ENCODE measurements at regions of chr11 and their contacts with region 1.

Region 1: DNA sequence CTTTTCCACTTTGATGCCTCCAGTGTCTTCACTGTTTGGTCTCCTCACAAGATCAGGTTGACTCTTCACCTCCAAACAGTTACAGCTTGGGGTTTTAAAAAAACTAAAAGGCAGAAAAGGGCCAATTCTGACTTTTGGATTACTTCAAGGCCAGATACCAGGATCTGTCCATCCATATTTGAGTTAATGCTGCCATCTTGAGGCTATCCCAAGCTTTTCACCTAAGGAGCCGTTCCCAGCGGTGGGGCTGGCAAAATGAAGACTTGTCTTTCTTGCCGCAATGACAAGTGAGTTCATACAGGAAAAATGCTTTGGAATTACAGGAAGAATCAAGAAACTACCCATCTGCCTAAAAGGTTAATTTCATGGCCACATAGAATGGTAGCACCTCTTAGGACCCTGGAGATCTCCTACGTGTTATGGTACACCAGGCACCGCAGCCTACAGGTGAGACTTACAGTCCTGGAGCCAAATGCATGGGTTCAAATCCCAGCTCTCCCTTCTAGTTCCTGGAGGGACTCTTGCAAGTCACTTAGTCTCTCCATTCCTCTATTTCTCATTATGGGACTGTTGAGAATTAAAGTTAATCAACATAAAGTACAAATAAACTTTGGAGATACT is 6.0 kb upstream of the OR5B21 start:
- DNase-seq: peak; percentile 64
- ATAC-seq: peak; percentile 96
- H3K4me3 ChIP-seq: no peak overlapping the region
- H3K27ac ChIP-seq: no peak overlapping the region
- H3K4me1 ChIP-seq: no peaks in the 10 kb centered on the region
- H3K27me3 ChIP-seq: 0 out of 2 replicates have a peak, but pooled peaks cover 9% of the 10 kb centered on the region
- CTCF ChIP-seq: peak; percentile 70 to 83 (median 75)
- POLR2A ChIP-seq: no peak
- RAD21 ChIP-seq: peak; percentile 91

Region 2: GRCh38 chr11:57456960-57457642 is 1056.8 kb before region 1 on chr11:
- CTCF ChIA-PET with region 1: interaction called, 4 read pairs
- POLR2A ChIA-PET with region 1: no interaction called
- RAD21 ChIA-PET with region 1: no interaction called
- intact Hi-C with region 1: loop called (anchors 5 kb)
- DNase-seq: peak; percentile 79
- ATAC-seq: peak; percentile 71
- H3K4me3 ChIP-seq: peak overlapping the region in 1 of 2 experiments; percentile 67; a peak in 2 of 4 replicates
- H3K27ac ChIP-seq: no peak overlapping the region
- H3K4me1 ChIP-seq: peaks cover 16 to 42% of the 10 kb centered on the region in 2 experiments; a peak in 3 of 4 replicates
- H3K27me3 ChIP-seq: peaks cover 3% of the 10 kb centered on the region; the same call in 1 of the 2 replicates
- CTCF ChIP-seq: peak; percentile 89 to 99 (median 89)
- POLR2A ChIP-seq: no peak
- RAD21 ChIP-seq: peak; percentile 94

Region 3: GRCh38 chr11:57567515-57568329 is 946.1 kb before region 1 on chr11 and contains the start of gene UBE2L6:
- CTCF ChIA-PET with region 1: no interaction called
- POLR2A ChIA-PET with region 1: no interaction called
- RAD21 ChIA-PET with region 1: no interaction called
- intact Hi-C with region 1: loop called (anchors 1 kb)
- DNase-seq: no peak
- ATAC-seq: peak; percentile 87
- H3K4me3 ChIP-seq: peak within 1 kb of the TSS; percentile 66 to 73
- H3K27ac ChIP-seq: peak within 1 kb of the TSS; percentile 67
- H3K4me1 ChIP-seq: peaks cover 7 to 19% of the 10 kb centered on the region in 2 experiments; a peak in 3 of 4 replicates
- H3K27me3 ChIP-seq: no peaks in the 10 kb centered on the region
- CTCF ChIP-seq: no peak; a peak in 2 of 6 replicates
- POLR2A ChIP-seq: no peak
- RAD21 ChIP-seq: no peak
- total RNA-seq, gene UBE2L6: 24.8 TPM

Region 4: DNA sequence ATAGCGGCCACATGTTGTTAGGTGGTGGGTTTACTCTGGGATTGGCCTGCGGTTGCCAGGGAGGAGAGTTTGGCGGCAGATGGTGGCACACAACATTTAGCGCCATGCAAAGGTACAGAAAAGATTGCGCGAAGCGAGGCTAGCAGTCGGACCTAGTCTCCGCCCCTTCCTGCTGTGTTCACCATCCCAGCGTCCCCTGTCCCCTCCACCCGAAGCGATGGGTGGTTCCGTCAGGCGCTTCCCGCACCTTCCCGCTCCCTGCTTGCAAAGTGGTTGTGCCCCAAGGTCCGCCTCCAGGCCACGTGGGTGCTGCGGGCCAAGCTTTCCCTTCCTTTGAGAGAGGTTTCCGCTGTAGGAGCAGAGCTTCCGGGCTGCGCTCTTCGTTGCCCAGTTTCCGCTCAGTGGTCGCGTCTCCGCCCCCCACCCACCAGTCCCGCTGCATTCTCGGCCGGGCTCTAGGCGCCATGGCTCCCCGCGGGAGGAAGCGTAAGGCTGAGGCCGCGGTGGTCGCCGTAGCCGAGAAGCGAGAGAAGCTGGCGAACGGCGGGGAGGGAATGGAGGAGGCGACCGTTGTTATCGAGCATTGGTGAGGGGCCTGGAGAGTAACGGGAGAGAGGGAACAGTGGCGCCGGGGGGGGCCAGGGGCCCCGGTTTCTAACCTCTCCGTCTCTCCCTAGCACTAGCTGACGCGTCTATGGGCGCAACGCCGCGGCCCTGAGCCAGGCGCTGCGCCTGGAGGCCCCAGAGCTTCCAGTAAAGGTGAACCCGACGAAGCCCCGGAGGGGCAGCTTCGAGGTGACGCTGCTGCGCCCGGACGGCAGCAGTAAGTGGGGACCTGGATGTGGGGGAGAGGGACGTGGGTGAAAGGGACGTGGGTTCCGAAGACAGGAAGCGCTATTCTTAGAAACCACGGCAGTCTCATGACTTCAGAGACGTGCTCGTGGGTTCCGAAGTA is 772.4 kb before region 1 on chr11 and contains the start of gene SELENOH:
- CTCF ChIA-PET with region 1: no interaction called
- POLR2A ChIA-PET with region 1: no interaction called
- RAD21 ChIA-PET with region 1: no interaction called
- intact Hi-C with region 1: loop called (anchors 5 kb)
- DNase-seq: peak; percentile 94
- ATAC-seq: peak; percentile 95
- H3K4me3 ChIP-seq: peak within 1 kb of the TSS; percentile 95 to 97
- H3K27ac ChIP-seq: peak within 1 kb of the TSS; percentile 76
- H3K4me1 ChIP-seq: peaks cover 0 to 17% of the 10 kb centered on the region in 2 experiments; a peak in 2 of 4 replicates
- H3K27me3 ChIP-seq: no peaks in the 10 kb centered on the region
- CTCF ChIP-seq: no peak
- POLR2A ChIP-seq: peak; percentile 62
- RAD21 ChIP-seq: no peak
- total RNA-seq, gene SELENOH: 194 TPM

Region 5: DNA sequence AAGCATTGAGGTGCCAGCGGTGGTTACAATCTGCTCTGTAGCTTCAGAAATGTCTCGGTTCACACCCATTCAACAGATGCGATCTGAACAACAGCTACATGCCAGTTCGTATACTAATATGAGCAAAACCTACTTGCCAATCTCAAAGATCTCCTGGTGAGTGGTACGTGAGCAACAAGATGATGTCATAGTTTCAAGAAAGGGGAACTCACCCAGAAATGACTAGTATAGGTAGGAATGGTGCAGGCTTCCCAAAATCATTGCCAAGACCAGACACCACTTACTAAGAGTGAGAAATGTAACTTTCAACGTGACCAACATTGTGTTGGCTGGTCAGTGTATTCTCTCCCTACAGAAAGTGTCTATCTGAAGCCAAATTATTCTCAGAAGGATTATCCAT is 452.0 kb before region 1 on chr11:
- CTCF ChIA-PET with region 1: no interaction called
- POLR2A ChIA-PET with region 1: no interaction called
- RAD21 ChIA-PET with region 1: no interaction called
- intact Hi-C with region 1: loop called (anchors 10 kb)
- DNase-seq: no peak
- ATAC-seq: no peak
- H3K4me3 ChIP-seq: no peak overlapping the region
- H3K27ac ChIP-seq: no peak overlapping the region
- H3K4me1 ChIP-seq: peaks cover 6 to 18% of the 10 kb centered on the region in 2 experiments; a peak in 2 of 4 replicates
- H3K27me3 ChIP-seq: no peaks in the 10 kb centered on the region
- CTCF ChIP-seq: no peak
- POLR2A ChIP-seq: no peak
- RAD21 ChIP-seq: no peak